Right ventricle myocardium superior (tissue), 1 donor: ENCODE measurements at regions of chr1 and their contacts with region 1.

Region 1: GRCh38 chr1:155127105-155127964 is at the start of gene EFNA1:
- DNase-seq: peak; percentile 84
- ATAC-seq: peak; percentile 79
- total RNA-seq, gene EFNA1: 41.5 TPM

Region 2: DNA sequence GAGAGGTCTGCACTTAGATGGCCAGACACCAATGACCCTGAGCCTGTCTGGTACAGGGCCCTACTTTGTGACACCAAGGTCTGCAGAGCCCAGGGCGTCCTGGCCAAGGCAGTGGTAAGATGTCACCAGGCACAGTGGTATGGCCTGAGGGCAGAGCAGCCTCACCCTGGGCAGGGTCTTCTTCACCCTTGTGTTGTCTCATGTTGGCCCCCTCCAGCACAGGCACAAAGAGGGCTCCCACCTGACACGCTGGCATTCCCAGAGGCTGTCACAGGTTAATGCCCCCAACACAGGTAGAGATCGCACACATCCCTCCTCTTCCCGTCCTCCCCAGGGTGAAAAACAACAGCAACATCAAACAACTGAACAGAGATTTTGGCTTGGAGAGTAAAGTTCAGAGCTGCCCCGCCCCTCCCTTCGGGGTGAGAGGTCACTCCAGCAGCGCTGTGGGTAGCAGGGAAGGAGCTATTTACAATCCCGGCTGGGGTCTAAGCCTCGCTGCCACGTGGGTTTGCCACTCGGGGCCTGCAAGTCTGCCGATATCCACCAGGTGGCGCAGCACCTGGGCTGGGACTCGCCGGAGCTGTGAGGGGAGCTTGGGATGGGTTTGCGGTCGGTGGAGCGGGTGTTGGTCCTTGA is 36.1 kb before region 1 on chr1:
- intact Hi-C with region 1: loop called (anchors 5 kb)
- DNase-seq: peak; percentile 89
- ATAC-seq: peak; percentile 74